PC-3 (cell line): ENCODE measurements at regions of chrX and their contacts with region 1.

Region 1: GRCh38 chrX:55011294-55011693 is 11.1 kb downstream of the APEX2 start:
- DNase-seq: peak; percentile 42
- ATAC-seq: no peak
- H3K4me3 ChIP-seq: no peak overlapping the region
- H3K27ac ChIP-seq: no peak overlapping the region
- H3K4me1 ChIP-seq: peaks cover 34% of the 10 kb centered on the region
- H3K27me3 ChIP-seq: no peaks in the 10 kb centered on the region
- CTCF ChIP-seq: peak; percentile 63

Region 2: DNA sequence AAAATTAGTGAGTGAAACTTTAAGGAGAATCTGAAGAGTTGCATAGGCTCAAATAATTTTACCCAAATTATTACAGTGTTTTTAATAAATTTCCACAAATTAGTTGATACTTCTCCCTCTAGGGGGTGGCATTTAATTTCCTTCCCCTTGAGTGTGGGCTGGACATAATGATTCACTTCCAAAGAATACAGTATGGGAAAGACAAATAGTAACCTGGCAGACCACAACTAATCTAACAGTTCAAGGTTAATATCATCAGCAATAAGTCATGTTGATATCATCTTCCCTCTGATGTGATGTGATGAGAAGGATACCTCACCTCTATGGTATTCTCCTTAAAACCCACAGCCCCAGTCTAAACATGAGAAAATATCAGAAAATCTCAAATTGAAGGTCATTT is 32.8 kb before region 1 on chrX:
- CTCF ChIA-PET with region 1: no interaction called
- POLR2A ChIA-PET with region 1: no interaction called
- intact Hi-C with region 1: loop called (anchors 1 kb)
- DNase-seq: peak; percentile 79
- ATAC-seq: peak; percentile 95
- H3K4me3 ChIP-seq: no peak overlapping the region
- H3K27ac ChIP-seq: peak overlapping the region; percentile 61
- H3K4me1 ChIP-seq: peaks cover 15% of the 10 kb centered on the region
- H3K27me3 ChIP-seq: no peaks in the 10 kb centered on the region
- CTCF ChIP-seq: peak; percentile 63

Region 3: DNA sequence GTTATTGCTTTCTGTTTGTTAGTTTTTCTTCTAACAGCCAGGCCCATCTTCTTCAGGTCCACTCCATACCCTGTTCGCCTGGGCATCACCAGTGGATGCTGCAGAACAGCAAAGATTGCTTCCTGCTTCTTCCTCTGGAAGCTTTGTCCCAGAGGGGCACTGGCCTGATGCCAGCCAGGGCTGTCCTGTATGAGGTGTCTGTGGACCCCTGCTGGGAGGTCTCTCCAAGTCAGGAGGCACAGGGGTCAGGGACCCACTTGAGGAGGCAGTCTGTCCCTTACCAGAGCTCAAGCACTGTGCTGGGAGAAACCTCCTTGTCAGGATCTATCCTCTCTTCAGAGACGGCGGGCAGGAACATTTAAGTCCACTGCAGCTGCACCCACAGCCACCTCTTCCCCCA is 61.0 kb after region 1 on chrX:
- CTCF ChIA-PET with region 1: no interaction called
- POLR2A ChIA-PET with region 1: no interaction called
- intact Hi-C with region 1: no loop called
- DNase-seq: no peak
- ATAC-seq: no peak
- H3K4me3 ChIP-seq: no peak overlapping the region
- H3K27ac ChIP-seq: no peak overlapping the region
- H3K4me1 ChIP-seq: no peaks in the 10 kb centered on the region
- H3K27me3 ChIP-seq: no peaks in the 10 kb centered on the region
- CTCF ChIP-seq: no peak